ENCODE measurements at regions of chr6 and their contacts with region 1.

Region 1: DNA sequence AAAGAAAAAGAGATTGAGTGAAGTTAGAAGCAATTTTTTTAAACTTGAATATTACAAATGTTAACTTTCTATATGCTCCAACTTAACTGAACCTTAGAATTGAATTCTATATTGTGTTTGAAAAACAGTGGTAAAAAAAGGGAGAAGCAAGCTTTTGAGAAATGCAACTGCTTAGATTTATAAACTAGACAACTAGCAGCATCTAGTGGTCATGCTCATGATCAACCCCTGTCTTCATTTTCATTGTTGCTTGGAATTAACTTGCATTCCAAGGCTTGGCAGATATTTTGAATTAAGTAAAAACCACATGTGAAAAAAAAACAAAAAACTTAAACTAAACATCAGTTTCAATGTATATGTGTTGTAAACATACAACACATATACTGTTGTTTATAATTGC is 113.1 kb downstream of the C6orf58 start:
- DNase-seq: peak; percentile 28
- ATAC-seq: peak; percentile 57
- H3K4me3 ChIP-seq: no peak overlapping the region
- H3K27ac ChIP-seq: no peak overlapping the region
- H3K4me1 ChIP-seq: no peaks in the 10 kb centered on the region
- H3K27me3 ChIP-seq: no peaks in the 10 kb centered on the region; the same call in 1 of the 2 replicates
- CTCF ChIP-seq: peak; percentile 56
- POLR2A ChIP-seq: no peak
- RAD21 ChIP-seq: peak; percentile 51

Region 2: DNA sequence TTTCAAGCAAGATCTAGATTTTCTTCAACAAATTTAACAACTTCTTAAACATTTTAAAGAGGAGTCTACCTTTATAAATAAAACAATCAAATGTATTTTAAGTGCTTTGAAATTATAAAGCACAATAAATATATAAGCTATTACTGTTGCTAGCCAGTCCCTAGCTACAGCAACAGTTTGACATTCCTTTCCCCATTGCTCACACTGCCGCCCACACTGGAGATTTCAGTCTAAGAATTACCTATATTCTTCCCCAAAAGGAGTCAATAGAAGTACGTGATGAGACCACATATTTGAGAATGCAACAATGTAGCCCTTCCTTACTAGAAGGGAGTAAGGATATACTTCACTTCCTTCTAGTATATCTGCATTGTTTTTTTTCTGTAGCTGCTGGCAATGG is 488.8 kb before region 1 on chr6:
- CTCF ChIA-PET with region 1: no interaction called
- POLR2A ChIA-PET with region 1: no interaction called
- dilution Hi-C with region 1: no loop called
- in situ Hi-C with region 1: no loop called
- intact Hi-C with region 1: no loop called
- DNase-seq: peak; percentile 78
- ATAC-seq: peak; percentile 91
- H3K4me3 ChIP-seq: no peak overlapping the region
- H3K27ac ChIP-seq: no peak overlapping the region
- H3K4me1 ChIP-seq: no peaks in the 10 kb centered on the region
- H3K27me3 ChIP-seq: no peaks in the 10 kb centered on the region
- CTCF ChIP-seq: no peak
- POLR2A ChIP-seq: no peak
- RAD21 ChIP-seq: no peak

Region 3: DNA sequence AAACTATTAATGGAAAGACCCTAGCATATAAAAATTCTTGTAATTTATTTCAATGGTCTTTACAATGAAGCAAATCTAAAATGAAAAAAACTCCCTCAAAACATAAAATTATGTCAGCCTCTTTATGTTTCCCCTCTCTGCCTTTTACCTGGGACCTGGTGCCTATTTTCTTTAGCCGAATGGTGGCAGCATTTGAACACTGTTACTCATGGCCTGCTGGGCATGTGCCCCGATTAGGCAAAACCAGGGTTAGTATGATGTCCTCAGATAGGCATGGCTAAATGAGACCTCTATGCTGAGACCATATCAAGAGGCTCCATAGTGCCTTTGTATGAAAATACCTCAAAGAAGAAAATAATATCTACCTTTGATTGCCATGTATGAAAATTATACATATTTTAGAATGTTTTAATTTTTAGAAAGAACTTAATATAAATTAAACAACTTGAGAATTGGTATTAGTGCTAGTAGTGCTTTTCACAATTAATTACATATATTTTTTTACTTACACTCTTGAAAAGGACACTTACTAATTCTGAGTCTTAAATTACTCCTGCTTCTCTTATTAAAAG is 135.6 kb before region 1 on chr6:
- CTCF ChIA-PET with region 1: interaction called, 4 read pairs
- POLR2A ChIA-PET with region 1: no interaction called
- dilution Hi-C with region 1: no loop called
- in situ Hi-C with region 1: no loop called
- intact Hi-C with region 1: loop called (anchors 2 kb)
- DNase-seq: peak; percentile 27
- ATAC-seq: peak; percentile 73
- H3K4me3 ChIP-seq: no peak overlapping the region
- H3K27ac ChIP-seq: no peak overlapping the region
- H3K4me1 ChIP-seq: no peaks in the 10 kb centered on the region
- H3K27me3 ChIP-seq: no peaks in the 10 kb centered on the region; the same call in 1 of the 2 replicates
- CTCF ChIP-seq: peak; percentile 37
- POLR2A ChIP-seq: no peak
- RAD21 ChIP-seq: peak; percentile 60

Measured in IMR-90 (cell line).